ENCODE measurements at regions of chr3 and their contacts with region 1.

Region 1: GRCh38 chr3:83523470-83524073 is 1435.2 kb upstream of the CADM2 start:
- DNase-seq: peak; percentile 44
- H3K4me3 ChIP-seq: no peak overlapping the region
- H3K27ac ChIP-seq: no peak overlapping the region
- H3K4me1 ChIP-seq: no peaks in the 10 kb centered on the region
- H3K27me3 ChIP-seq: no peaks in the 10 kb centered on the region
- CTCF ChIP-seq: peak; percentile 71 to 83

Region 2: DNA sequence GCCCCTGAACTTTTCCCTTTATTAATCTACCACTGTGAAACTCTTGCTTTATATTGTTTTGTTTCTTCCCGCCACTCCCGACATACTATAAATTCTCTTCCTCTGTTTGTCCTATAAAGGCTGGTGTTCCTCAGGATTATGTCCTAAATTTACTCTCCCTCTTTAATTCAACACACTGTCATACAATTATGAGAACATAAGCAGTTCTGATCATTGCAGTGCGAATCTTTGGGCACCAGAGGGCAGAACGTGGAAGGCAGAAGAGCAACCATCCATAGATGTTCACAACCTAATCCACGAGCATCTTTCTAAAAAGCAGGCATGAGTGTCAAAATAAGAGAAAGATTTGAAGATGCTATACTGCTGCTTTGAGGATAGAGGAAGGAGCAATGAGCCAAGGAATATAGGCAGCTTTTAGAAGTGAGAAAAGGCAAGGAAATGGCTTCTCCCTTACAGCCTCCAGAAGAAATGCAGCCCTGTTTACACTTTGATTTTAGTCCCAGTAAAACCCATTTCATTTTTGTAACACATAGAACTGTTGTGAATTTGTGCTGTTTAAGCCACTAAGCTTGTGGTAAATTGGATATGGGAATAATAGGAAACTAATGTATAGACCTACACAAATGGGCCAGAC is 1941.5 kb before region 1 on chr3:
- CTCF ChIA-PET with region 1: no interaction called
- dilution Hi-C with region 1: no loop called
- in situ Hi-C with region 1: no loop called
- intact Hi-C with region 1: loop called (anchors 5 kb)
- DNase-seq: peak; percentile 19
- H3K4me3 ChIP-seq: no peak overlapping the region
- H3K27ac ChIP-seq: no peak overlapping the region
- H3K4me1 ChIP-seq: no peaks in the 10 kb centered on the region
- H3K27me3 ChIP-seq: no peaks in the 10 kb centered on the region
- CTCF ChIP-seq: peak; percentile 74

Region 3: DNA sequence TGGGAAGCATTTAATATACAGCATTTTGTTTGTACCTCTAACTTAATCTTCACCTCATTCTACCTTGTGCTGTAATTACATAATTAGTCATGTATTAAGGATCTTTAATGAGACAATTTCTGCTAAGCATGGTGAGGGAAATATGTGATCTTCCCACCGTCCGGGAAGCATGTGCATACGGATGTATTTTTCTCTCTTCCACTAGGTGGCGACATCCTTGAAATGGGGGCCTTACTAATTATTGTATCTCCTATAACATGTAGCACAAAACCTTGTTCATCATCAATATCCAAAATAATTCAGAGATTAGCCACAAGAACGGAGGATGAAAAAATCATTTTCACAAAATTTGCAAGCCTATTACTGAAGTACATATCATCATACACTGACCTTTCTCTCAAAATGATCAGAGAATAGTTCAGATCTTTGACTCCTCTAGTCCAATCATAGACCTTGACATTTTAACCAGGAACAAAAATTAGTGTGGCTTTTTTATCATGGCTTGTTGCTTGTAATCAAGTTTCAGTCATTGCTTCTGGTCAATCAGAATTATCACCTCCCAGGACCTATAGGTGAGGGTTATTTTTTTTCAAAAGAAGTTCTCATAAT is 1613.2 kb before region 1 on chr3:
- CTCF ChIA-PET with region 1: no interaction called
- dilution Hi-C with region 1: no loop called
- in situ Hi-C with region 1: no loop called
- intact Hi-C with region 1: loop called (anchors 5 kb)
- DNase-seq: peak; percentile 24
- H3K4me3 ChIP-seq: no peak overlapping the region
- H3K27ac ChIP-seq: no peak overlapping the region
- H3K4me1 ChIP-seq: no peaks in the 10 kb centered on the region
- H3K27me3 ChIP-seq: no peaks in the 10 kb centered on the region
- CTCF ChIP-seq: peak; percentile 69 to 75

Region 4: DNA sequence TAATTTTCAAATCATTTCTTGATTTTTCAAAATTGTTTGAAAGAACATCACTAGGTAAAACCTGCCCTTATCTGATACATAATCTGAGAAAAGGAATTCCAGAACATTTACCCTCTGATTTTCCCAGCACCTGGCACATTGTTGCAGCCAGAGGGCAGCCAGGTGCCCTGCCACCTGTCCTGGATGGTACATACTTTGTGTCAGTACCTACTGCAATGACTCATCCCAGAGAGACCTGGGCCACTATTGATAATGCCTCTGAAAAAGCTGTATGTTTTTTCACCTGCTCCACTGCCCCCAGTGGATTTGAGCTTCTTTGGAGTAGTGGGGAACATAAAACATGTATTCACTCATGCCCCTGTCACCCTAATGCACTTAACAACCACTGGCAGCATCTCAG is 1113.2 kb before region 1 on chr3:
- CTCF ChIA-PET with region 1: no interaction called
- dilution Hi-C with region 1: no loop called
- in situ Hi-C with region 1: no loop called
- intact Hi-C with region 1: loop called (anchors 1 kb)
- DNase-seq: no peak
- H3K4me3 ChIP-seq: no peak overlapping the region
- H3K27ac ChIP-seq: no peak overlapping the region
- H3K4me1 ChIP-seq: no peaks in the 10 kb centered on the region
- H3K27me3 ChIP-seq: no peaks in the 10 kb centered on the region
- CTCF ChIP-seq: peak in 1 of 2 donors; percentile 48

Region 5: DNA sequence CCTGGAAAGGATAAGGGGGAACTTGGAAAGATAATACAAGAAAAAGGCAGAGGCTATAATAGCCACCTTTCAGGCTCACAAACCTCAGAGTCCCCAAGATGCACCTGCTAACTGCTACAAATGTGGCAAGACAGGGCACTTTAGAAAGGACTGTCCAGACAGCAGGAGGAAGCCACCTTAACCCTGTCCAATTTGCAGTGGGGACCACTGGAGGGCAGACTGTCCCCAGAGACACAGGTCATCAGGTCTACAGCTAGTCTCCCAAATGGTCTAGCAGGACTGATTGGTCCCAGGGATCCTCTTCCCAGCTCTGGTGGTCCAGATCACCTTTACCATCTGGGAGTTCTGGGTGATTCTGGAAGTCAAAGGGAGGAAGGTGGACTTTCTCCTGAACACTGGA is 879.6 kb before region 1 on chr3:
- CTCF ChIA-PET with region 1: no interaction called
- dilution Hi-C with region 1: no loop called
- in situ Hi-C with region 1: no loop called
- intact Hi-C with region 1: loop called (anchors 1 kb)
- DNase-seq: peak; percentile 16
- H3K4me3 ChIP-seq: no peak overlapping the region
- H3K27ac ChIP-seq: no peak overlapping the region
- H3K4me1 ChIP-seq: peaks cover 34% of the 10 kb centered on the region
- H3K27me3 ChIP-seq: no peaks in the 10 kb centered on the region
- CTCF ChIP-seq: peak; percentile 26 to 37

Region 6: GRCh38 chr3:82764521-82764920 is 759.1 kb before region 1 on chr3:
- CTCF ChIA-PET with region 1: no interaction called
- dilution Hi-C with region 1: no loop called
- in situ Hi-C with region 1: no loop called
- intact Hi-C with region 1: no loop called
- DNase-seq: no peak
- H3K4me3 ChIP-seq: no peak overlapping the region
- H3K27ac ChIP-seq: no peak overlapping the region
- H3K4me1 ChIP-seq: no peaks in the 10 kb centered on the region
- H3K27me3 ChIP-seq: peaks cover under 1% of the 10 kb centered on the region
- CTCF ChIP-seq: no peak

Measured in mammary epithelial cell (primary cell).